PC-9 (cell line): ENCODE measurements at regions of chr2 and their contacts with region 1.

Region 1: DNA sequence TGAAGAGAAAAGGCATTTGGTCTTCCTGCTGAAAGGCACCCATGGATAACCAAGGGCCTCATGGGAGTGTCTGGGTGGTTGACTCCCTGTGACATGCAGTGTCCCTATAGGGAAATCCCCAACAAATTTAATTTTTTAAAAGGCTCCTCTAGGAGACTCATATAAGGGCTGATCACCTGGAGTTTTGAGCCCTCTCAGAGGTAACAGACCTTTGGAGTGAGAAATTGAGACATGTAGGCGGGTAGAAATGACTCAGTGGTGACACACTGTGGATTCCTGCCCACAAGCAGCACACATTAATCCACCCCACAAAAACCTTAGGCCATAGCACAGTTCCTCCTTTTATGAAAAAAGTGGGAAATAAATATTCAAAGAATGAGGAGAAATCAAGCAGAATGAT is 557.0 kb upstream of the CNTNAP5 start:
- DNase-seq: no peak
- H3K4me3 ChIP-seq: no peak overlapping the region
- H3K27ac ChIP-seq: no peak overlapping the region
- H3K4me1 ChIP-seq: no peaks in the 10 kb centered on the region
- H3K27me3 ChIP-seq: no peaks in the 10 kb centered on the region
- CTCF ChIP-seq: no peak

Region 2: GRCh38 chr2:124975224-124975623 is 1507.2 kb after region 1 on chr2:
- CTCF ChIA-PET with region 1: no interaction called
- POLR2A ChIA-PET with region 1: interaction called, 11 read pairs
- intact Hi-C with region 1: no loop called
- DNase-seq: no peak
- H3K4me3 ChIP-seq: no peak overlapping the region
- H3K27ac ChIP-seq: no peak overlapping the region
- H3K4me1 ChIP-seq: no peaks in the 10 kb centered on the region
- H3K27me3 ChIP-seq: no peaks in the 10 kb centered on the region
- CTCF ChIP-seq: no peak